Psoas muscle (tissue), 8 donors: ENCODE measurements at regions of chr1 and their contacts with region 1.

Region 1: DNA sequence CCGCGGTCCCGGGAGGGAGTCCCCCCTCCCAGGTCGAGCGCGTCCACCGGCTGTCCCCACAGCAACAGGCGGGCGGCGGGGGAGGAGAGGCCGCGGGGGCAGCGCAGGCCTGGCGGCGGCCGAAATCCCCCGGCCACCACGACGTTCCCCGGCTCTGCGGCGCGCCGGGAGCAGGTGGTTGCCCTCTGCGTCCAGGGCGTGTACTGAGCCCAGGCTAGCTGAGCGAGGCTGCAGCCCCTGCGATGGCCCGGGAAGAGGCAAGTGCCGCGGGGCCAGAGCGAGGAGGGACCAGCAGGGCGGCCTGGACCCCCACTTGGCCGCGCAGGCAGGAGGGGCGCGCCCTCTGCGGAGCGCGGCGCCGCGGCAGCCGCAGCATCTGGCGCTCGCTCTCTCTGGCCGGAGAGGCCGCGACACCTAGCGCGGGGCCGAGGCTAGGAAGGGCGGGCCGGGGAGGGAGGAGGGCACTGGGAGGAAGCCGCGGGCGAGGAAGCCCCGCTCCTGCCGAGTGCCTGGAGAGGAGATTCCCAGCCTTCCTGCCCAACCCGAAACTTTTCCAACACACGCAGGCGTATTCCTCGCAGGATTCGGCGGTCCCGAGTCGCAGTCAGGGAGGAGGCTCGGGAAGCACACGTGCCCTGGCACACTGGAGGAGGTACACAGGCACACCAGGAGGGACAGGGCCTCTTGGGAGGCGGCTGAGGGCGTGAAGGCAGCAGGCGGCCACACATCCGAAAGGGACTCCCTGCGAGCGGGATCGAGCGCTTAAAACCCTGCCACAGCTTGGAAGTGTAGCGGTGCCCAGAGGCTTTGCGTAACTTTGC is 4.9 kb upstream of the PROX1 start:
- DNase-seq: peak in 1 of 2 donors; percentile 62
- ATAC-seq: peak; percentile 47 to 66 (median 57)
- H3K4me3 ChIP-seq: peak overlapping the region; percentile 66
- H3K27ac ChIP-seq: no peak overlapping the region
- H3K4me1 ChIP-seq: peaks cover 12% of the 10 kb centered on the region
- H3K27me3 ChIP-seq: peaks cover 0 to 63% (median 6%) of the 10 kb centered on the region in 3 donors
- CTCF ChIP-seq: peak; percentile 7

Region 2: GRCh38 chr1:213858581-213858980 is 124.3 kb before region 1 on chr1:
- intact Hi-C with region 1: no loop called
- DNase-seq: no peak
- ATAC-seq: no peak
- H3K4me3 ChIP-seq: no peak overlapping the region
- H3K27ac ChIP-seq: no peak overlapping the region
- H3K4me1 ChIP-seq: no peaks in the 10 kb centered on the region
- H3K27me3 ChIP-seq: no peaks in the 10 kb centered on the region
- CTCF ChIP-seq: no peak

Region 3: DNA sequence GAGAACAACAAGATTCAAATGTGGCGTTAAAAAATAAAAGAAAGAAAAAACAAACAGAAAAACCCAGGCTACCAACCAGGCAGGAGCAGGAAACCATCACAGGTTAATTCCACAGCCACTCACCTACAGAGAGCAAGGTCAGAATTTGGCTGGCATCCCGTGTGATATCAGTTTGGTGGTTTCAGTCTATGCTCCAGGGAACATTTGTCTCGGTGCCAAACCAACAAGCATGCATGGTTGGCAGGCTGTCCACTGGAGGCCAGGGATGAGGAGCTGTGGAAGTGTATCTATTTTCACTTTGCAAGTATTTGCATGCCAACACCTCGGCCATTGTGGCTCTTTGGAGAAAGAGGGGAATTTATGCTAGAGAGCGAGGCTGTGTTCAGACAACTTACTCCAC is 48.2 kb before region 1 on chr1:
- intact Hi-C with region 1: loop called in 1 of 2 experiments (anchors 5 kb)
- DNase-seq: no peak
- ATAC-seq: peak in 2 of 4 donors; percentile 53 to 74
- H3K4me3 ChIP-seq: no peak overlapping the region
- H3K27ac ChIP-seq: no peak overlapping the region
- H3K4me1 ChIP-seq: no peaks in the 10 kb centered on the region
- H3K27me3 ChIP-seq: no peaks in the 10 kb centered on the region
- CTCF ChIP-seq: no peak

Region 4: DNA sequence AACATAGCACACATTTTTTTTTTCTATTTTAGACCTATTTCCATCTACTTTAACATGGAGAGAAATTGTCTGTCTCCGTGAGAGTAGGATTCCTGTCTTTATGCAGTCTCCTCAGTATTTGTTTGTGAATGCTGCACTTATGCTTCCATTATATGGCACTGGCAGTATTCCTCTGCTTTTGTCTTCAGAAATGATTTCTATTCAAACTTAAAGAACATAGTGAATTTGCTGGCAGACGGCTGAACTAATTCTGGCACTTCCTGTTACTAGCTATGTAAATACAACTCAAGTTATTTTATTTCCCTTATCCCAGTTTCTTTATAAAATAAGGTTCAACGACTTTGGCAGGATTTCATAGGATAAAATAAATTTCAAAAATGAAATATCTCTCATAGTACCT is 1629.5 kb after region 1 on chr1:
- intact Hi-C with region 1: loop called in 1 of 2 experiments (anchors 5 kb)
- DNase-seq: no peak
- ATAC-seq: no peak
- H3K4me3 ChIP-seq: no peak overlapping the region
- H3K27ac ChIP-seq: no peak overlapping the region
- H3K4me1 ChIP-seq: no peaks in the 10 kb centered on the region
- H3K27me3 ChIP-seq: no peaks in the 10 kb centered on the region
- CTCF ChIP-seq: no peak